Activated naive CD4-positive, alpha-beta T cell treated with anti-CD3 and anti-CD28 coated beads, Interleukin-2, amount 10 ng/mL, durations not matched to agents 7 days and 5 days (primary cell): ENCODE measurements at regions of chr14 and their contacts with region 1.

Region 1: GRCh38 chr14:69726761-69727511 is 40.0 kb upstream of the SRSF5 start:
- DNase-seq: peak; percentile 84
- H3K4me3 Mint-ChIP-seq: peak overlapping the region; percentile 57
- H3K27ac Mint-ChIP-seq: peak overlapping the region; percentile 6
- H3K4me1 Mint-ChIP-seq: peaks cover 28% of the 10 kb centered on the region
- H3K27me3 Mint-ChIP-seq: peaks cover 18% of the 10 kb centered on the region

Region 2: DNA sequence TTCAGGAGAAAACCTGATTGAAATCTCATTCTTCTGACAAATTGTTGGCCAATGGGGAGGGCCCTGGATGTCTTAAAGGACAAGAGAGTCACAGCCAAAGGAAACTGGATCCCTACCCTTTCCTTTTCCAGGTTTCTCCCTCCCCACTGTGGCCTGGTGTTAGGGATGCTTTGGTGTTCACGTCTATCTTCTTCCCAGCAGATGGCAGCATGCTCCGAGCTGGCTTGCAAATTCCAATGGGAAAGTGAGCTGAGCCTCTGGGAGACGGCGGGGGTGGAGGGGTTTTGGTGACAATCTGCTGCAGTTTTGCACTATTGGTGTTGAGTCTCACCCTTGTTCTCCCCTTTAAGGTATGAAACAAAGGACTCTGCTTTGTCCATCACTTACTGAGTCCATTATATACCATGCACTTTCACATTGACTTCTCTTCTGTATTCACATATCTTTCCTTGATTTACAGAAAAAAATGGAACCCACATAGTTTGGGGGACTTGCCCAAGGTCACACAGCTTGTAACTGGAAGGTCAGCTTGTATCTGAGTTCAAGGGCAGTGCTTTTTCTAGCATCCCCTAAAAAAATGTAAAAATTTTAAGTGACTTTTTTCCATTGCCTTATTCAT is 191.6 kb before region 1 on chr14:
- CTCF ChIA-PET with region 1: no interaction called
- DNase-seq: no peak
- H3K4me3 Mint-ChIP-seq: no peak overlapping the region
- H3K27ac Mint-ChIP-seq: no peak overlapping the region
- H3K4me1 Mint-ChIP-seq: no peaks in the 10 kb centered on the region
- H3K27me3 Mint-ChIP-seq: peaks cover 56% of the 10 kb centered on the region

Region 3: GRCh38 chr14:69580009-69580577 is 146.8 kb before region 1 on chr14:
- CTCF ChIA-PET with region 1: interaction called, 23 read pairs
- DNase-seq: peak; percentile 30
- H3K4me3 Mint-ChIP-seq: no peak overlapping the region
- H3K27ac Mint-ChIP-seq: no peak overlapping the region
- H3K4me1 Mint-ChIP-seq: no peaks in the 10 kb centered on the region
- H3K27me3 Mint-ChIP-seq: peaks cover 60% of the 10 kb centered on the region

Region 4: DNA sequence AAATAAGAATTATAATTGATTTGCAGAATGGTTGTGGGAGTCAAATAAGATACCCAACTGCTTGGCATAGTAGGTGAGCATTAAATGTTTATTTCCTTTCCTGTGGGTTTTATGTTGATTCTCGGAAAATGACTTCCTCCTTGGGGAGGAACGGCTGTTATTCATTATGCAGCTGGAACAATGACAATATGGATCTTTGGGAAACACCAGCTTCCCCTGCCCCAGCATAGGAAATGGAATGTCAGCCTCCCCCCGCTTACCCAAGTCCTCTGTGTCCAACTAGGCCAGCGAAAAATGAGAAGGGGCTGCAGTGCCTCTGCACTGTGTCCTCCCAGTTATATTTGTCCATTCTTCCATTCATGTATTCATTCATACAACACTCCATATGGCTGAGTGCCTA is 140.5 kb before region 1 on chr14:
- CTCF ChIA-PET with region 1: interaction called, 23 read pairs
- DNase-seq: no peak
- H3K4me3 Mint-ChIP-seq: no peak overlapping the region
- H3K27ac Mint-ChIP-seq: no peak overlapping the region
- H3K4me1 Mint-ChIP-seq: no peaks in the 10 kb centered on the region
- H3K27me3 Mint-ChIP-seq: peaks cover 26% of the 10 kb centered on the region

Region 5: GRCh38 chr14:69606258-69607184 is 120.4 kb before region 1 on chr14:
- CTCF ChIA-PET with region 1: interaction called, 94 read pairs
- DNase-seq: no peak
- H3K4me3 Mint-ChIP-seq: no peak overlapping the region
- H3K27ac Mint-ChIP-seq: no peak overlapping the region
- H3K4me1 Mint-ChIP-seq: peaks cover 27% of the 10 kb centered on the region
- H3K27me3 Mint-ChIP-seq: no peaks in the 10 kb centered on the region